WTC11 (cell line): ENCODE measurements at regions of chr1 and their contacts with region 1.

Region 1: DNA sequence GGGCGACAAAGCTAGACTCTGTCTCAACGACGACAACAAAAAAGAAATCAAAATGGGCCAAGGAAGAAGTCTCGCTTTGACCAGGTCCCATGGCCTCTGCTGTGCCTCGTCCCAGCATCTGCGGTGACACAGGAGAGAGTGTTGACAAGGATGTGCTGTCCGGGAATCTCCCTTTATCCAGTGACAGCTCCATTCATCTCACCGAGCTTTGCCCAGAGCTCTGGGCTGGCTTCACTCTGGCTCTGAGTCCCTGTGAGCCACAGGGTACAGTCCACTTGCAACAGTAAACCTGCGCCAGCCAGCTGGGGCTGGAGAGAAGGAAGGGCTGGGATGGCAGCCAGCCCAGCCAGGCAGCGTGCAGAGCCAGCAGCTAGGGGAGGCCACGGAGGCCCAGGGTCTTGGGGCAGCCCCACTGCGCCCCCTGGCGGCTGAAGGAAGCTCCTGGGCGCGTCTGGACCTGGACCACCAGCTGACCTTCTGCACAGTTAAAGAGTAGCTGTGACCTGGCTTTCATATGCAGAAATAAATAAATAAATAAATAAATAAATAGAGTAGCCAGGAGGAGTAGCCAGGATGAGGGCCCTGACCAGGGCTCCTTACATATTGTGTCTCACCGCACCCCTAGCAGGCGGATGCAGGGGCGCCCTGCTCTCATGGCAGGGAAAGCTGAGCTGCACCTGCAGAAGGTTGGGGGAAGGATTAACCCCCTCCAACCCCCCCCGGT is 29.7 kb downstream of the ENO1 start:
- DNase-seq: peak; percentile 91
- ATAC-seq: peak; percentile 94
- H3K4me3 Mint-ChIP-seq: no peak overlapping the region
- H3K27ac Mint-ChIP-seq: no peak overlapping the region
- H3K4me1 Mint-ChIP-seq: peaks cover 10% of the 10 kb centered on the region; the same call in 1 of the 2 replicates
- H3K27me3 Mint-ChIP-seq: no peaks in the 10 kb centered on the region
- CTCF ChIP-seq: peak; percentile 97

Region 2: DNA sequence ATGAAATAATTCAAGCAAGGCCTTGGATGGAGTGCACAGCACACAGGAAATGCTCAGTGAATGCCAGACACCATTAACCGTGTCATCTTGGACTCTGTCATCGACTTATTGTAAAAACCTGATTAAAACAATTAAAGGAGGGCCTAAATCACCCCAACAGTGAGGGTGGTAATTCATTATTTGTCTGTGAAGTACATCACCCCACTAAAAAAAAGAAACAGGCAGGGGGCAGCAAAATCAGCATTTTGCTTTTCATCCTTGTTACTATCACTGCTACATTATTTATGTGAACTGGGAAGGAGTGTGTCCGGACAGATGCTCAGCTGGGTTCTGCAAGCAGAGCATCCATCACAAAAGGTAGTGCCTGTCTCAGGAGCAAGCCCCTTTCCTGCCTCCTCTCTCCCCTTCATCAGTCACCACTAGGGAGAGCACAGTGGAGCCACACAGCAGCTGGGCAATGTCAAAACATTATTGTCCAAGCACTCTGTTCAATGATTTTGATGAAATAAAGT is 129.9 kb before region 1 on chr1:
- CTCF ChIA-PET with region 1: interaction called, 11 read pairs
- POLR2A ChIA-PET with region 1: no interaction called
- DNase-seq: no peak
- ATAC-seq: peak; percentile 98
- H3K4me3 Mint-ChIP-seq: no peak overlapping the region
- H3K27ac Mint-ChIP-seq: peak overlapping the region; percentile 48
- H3K4me1 Mint-ChIP-seq: peaks cover 58% of the 10 kb centered on the region
- H3K27me3 Mint-ChIP-seq: no peaks in the 10 kb centered on the region
- CTCF ChIP-seq: no peak

Region 3: DNA sequence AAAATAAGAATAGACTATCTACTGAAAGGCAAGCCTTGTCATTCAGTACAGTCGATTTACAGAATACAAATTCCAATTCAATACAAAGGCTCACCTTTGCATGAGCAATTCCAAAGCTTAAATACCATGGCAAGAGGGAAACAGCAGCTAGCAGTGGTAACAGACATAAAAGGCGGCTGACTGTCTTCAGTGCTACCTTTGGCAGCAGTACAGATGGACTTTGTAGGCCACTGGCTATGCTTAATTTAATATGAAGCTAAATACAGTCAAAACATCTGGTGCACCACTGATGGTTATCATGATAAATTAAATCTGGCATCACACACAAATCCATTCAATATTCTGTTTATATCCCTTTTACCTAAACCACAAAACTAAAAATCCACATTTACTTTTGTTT is 93.8 kb before region 1 on chr1:
- CTCF ChIA-PET with region 1: interaction called, 15 read pairs
- POLR2A ChIA-PET with region 1: no interaction called
- DNase-seq: no peak
- ATAC-seq: peak; percentile 50
- H3K4me3 Mint-ChIP-seq: no peak overlapping the region
- H3K27ac Mint-ChIP-seq: peak overlapping the region; percentile 36
- H3K4me1 Mint-ChIP-seq: peaks cover 39% of the 10 kb centered on the region
- H3K27me3 Mint-ChIP-seq: no peaks in the 10 kb centered on the region
- CTCF ChIP-seq: no peak

Region 4: DNA sequence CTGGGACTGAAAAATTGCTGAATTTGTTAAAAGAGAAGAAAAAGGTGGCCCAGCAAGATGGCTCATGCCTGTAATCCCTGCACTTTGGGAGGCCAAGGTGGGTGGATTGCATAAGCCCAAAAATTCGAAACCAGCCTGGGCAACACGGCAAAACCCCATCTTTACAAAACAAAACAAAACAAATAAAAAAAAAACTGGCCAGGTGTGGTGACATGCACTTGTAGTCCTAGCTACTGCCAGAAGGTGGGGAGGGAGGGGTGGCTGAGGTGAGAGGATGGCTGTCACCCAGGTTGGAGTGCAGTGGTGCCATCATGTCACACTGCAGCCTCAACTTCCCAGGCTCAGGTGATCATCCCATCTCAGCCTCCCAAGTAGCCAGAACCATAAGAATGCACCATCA is 54.3 kb before region 1 on chr1:
- CTCF ChIA-PET with region 1: interaction called, 11 read pairs
- POLR2A ChIA-PET with region 1: no interaction called
- DNase-seq: peak; percentile 26
- ATAC-seq: peak; percentile 72
- H3K4me3 Mint-ChIP-seq: no peak overlapping the region
- H3K27ac Mint-ChIP-seq: peak overlapping the region; percentile 73
- H3K4me1 Mint-ChIP-seq: peaks cover 58% of the 10 kb centered on the region
- H3K27me3 Mint-ChIP-seq: no peaks in the 10 kb centered on the region
- CTCF ChIP-seq: no peak

Region 5: GRCh38 chr1:8831340-8831739 is 17.5 kb before region 1 on chr1:
- CTCF ChIA-PET with region 1: interaction called, 44 read pairs
- POLR2A ChIA-PET with region 1: no interaction called
- DNase-seq: no peak
- ATAC-seq: peak; percentile 46; the same call in 1 of the 2 replicates
- H3K4me3 Mint-ChIP-seq: no peak overlapping the region
- H3K27ac Mint-ChIP-seq: no peak overlapping the region
- H3K4me1 Mint-ChIP-seq: no peaks in the 10 kb centered on the region
- H3K27me3 Mint-ChIP-seq: no peaks in the 10 kb centered on the region
- CTCF ChIP-seq: no peak

Region 6: DNA sequence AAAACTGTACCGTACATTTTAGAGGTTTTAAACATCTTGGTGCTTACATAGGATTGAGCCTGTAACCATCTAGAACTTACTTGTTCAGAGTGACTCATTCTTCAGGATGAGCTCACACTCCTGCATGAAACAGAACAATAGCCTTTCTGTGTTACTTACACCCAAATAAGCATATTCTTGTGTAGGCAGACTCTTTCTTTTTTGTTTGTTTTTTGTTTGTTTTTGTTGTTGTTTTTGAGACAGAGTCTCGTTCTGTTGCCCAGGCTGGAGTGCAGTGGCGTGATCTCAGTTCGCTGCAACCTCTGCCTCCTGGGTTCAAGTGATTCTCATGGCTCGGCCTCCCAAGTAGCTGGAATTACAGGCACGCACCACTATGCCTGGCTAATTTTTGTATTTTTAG is 93.1 kb after region 1 on chr1:
- CTCF ChIA-PET with region 1: interaction called, 14 read pairs
- POLR2A ChIA-PET with region 1: no interaction called
- DNase-seq: no peak
- ATAC-seq: no peak
- H3K4me3 Mint-ChIP-seq: no peak overlapping the region
- H3K27ac Mint-ChIP-seq: no peak overlapping the region
- H3K4me1 Mint-ChIP-seq: peaks cover 51% of the 10 kb centered on the region
- H3K27me3 Mint-ChIP-seq: no peaks in the 10 kb centered on the region
- CTCF ChIP-seq: no peak